Activated naive CD4-positive, alpha-beta T cell treated with anti-CD3 and anti-CD28 coated beads for 36 hours (primary cell): ENCODE measurements at regions of chr3 and their contacts with region 1.

Region 1: GRCh38 chr3:16884084-16884747 is 539 bp upstream of the PLCL2 start:
- DNase-seq: peak; percentile 80
- H3K4me3 Mint-ChIP-seq: peak overlapping the region; percentile 86
- H3K27ac Mint-ChIP-seq: peak overlapping the region; percentile 95
- H3K4me1 Mint-ChIP-seq: peaks cover 14% of the 10 kb centered on the region
- H3K27me3 Mint-ChIP-seq: no peaks in the 10 kb centered on the region

Region 2: DNA sequence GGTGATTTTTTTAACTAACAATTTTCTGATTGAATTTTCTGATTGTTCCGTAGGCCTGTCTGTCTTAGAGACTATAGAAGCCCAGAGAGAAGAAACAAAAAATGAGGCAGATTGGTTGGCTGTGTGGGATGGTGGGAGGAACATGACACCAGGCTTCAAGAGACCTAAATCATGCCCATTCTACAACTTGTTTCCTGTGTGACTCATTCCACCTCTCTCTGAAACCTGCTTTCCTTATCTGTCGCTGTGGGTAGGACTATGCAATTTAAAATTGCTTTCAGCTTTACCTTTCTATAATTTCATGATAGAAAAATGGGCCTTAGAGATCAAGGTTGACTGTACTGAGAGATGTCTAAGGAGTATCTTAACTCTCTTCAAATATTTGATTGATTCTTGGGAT is 574.7 kb before region 1 on chr3:
- CTCF ChIA-PET with region 1: no interaction called
- intact Hi-C with region 1: loop called (anchors 5 kb)
- DNase-seq: peak; percentile 76
- H3K4me3 Mint-ChIP-seq: peak overlapping the region; percentile 22
- H3K27ac Mint-ChIP-seq: peak overlapping the region; percentile 92
- H3K4me1 Mint-ChIP-seq: peaks cover 91% of the 10 kb centered on the region
- H3K27me3 Mint-ChIP-seq: no peaks in the 10 kb centered on the region

Region 3: DNA sequence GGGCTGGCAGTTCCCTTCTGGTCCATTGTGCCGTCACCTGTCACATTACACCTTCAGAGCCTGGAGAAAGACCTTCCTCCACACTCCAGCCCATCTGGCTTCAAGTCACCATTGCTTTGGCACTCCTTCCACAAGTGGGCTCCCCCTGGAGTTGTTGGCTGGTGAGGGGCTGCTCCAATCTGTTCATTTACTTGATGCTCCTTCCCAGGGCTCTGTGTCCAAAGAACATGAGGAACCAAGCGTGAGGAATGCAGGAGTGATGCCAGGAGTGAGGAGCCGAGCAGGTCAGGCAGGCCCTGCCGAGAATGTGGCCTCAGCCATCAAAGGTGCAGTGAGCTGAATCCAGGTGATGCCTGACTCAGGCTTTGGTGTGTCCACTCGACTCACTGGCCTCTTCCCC is 562.0 kb before region 1 on chr3:
- CTCF ChIA-PET with region 1: no interaction called
- intact Hi-C with region 1: no loop called
- DNase-seq: no peak
- H3K4me3 Mint-ChIP-seq: no peak overlapping the region
- H3K27ac Mint-ChIP-seq: peak overlapping the region; percentile 95
- H3K4me1 Mint-ChIP-seq: peaks cover 59% of the 10 kb centered on the region
- H3K27me3 Mint-ChIP-seq: no peaks in the 10 kb centered on the region

Region 4: DNA sequence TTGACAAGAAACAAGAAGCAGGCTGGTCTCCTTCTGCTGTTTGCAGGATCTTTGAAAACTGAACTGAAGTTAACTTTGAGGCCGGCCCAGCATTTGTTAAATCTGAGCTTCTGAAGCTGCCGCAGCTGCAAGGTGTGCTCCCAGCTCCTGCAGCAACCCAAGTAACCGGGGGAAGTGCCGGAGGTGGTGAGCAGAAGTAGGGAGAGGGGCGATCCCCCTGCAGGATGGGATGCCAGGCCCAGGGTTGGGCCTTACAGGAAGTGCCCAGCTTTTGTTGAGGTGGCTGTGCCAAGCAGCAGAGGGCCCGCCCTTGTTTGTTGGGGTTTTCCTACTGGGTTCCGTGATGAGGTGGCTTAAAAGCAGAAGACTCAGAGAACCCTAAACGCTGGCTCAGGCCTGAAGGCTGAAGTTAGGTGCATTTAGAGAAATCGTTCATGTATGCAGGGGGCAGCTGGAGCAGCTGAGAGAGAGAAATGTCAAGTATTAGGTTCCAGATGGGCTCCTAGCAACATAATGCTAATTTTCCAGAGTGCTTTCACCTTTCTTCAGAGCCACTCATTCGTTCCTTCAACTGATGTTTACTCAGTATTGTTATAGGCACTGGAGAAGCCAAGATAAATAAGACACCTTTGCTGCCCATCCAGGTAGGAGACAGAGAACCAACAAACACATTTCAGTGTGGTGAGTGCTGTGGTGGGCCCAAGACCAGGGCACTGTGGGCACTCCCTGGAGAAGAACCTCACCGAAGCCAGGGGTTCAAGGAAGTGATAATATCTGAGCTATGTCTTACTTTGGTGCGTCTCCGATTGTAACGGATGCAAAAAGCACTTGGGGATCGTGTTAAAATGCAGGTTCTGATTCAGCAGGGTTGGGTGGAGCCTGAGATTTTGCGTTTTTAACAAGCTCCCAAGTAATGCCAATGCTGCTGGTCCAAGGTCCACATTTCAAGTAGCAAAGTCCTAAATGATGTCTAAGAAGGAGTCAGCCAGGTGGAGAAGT is 41.6 kb before region 1 on chr3:
- CTCF ChIA-PET with region 1: interaction called, 6 read pairs
- intact Hi-C with region 1: loop called (anchors 1 kb)
- DNase-seq: peak; percentile 91
- H3K4me3 Mint-ChIP-seq: peak overlapping the region; percentile 72
- H3K27ac Mint-ChIP-seq: peak overlapping the region; percentile 93
- H3K4me1 Mint-ChIP-seq: peaks cover 68% of the 10 kb centered on the region
- H3K27me3 Mint-ChIP-seq: no peaks in the 10 kb centered on the region

Region 5: DNA sequence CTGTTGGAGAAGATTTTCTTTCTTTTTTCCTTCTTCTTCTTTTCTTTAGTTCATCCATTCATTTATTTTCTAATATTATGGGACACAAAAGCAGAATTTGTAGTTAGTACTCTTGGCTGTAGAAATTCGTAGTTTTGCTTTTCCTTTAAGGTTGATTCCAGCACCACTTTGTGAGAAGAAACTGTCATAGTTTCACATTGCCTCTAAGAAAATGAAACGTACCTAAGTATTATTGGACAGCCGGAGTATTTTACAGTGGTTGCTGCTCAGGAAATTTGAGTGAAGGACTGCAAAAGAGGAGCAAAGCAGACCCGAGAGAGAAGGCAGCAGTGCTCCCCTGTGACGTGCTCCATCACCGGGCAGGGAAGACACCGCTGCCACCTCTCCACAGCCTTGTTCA is 48.7 kb after region 1 on chr3:
- CTCF ChIA-PET with region 1: interaction called, 6 read pairs
- intact Hi-C with region 1: loop called (anchors 2 kb)
- DNase-seq: no peak
- H3K4me3 Mint-ChIP-seq: peak overlapping the region; percentile 69
- H3K27ac Mint-ChIP-seq: peak overlapping the region; percentile 16
- H3K4me1 Mint-ChIP-seq: peaks cover 92% of the 10 kb centered on the region
- H3K27me3 Mint-ChIP-seq: no peaks in the 10 kb centered on the region

Region 6: DNA sequence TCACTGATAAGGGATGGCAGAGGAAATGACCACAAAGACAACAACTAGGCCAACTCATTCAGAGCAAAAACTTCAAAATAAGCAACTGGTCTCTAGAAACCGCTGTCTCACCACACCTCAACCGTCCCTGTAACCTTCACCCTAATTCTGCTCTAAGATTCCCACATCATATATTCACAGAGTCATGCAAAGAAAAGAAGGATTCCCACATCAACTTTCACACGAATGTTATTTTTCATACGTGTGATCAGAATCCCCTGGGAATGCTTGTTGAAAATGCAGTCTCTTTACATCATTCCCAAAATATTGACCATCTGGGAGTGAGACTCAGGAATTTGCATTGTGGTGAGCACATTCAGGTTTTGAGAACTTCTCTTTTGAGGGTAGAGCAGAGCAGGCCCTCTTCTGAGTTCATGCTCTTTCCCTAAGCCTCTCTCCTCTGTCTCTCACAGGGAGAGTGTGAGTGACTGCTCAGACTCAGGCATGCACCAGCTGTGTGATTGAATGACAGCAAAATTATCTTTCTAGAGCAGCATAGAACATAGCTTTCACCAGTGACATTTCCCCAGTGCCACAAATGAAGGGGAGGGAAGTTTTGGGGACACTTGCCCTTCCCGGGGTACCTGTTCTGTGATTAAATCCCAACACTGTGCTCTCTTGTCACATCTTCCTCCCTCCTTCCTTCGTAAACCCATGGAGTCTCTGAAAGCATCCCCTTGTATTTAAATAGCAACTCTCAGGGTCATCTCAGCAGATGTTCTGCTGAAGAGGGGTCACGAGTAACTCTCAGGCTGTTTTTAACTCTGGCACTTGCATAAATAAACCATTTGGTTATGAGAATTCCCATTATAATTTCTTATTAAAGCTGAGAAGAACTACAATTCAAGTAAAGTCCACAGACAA is 171.4 kb after region 1 on chr3:
- CTCF ChIA-PET with region 1: no interaction called
- intact Hi-C with region 1: no loop called
- DNase-seq: no peak
- H3K4me3 Mint-ChIP-seq: no peak overlapping the region
- H3K27ac Mint-ChIP-seq: no peak overlapping the region
- H3K4me1 Mint-ChIP-seq: peaks cover 12% of the 10 kb centered on the region
- H3K27me3 Mint-ChIP-seq: no peaks in the 10 kb centered on the region

Region 7: DNA sequence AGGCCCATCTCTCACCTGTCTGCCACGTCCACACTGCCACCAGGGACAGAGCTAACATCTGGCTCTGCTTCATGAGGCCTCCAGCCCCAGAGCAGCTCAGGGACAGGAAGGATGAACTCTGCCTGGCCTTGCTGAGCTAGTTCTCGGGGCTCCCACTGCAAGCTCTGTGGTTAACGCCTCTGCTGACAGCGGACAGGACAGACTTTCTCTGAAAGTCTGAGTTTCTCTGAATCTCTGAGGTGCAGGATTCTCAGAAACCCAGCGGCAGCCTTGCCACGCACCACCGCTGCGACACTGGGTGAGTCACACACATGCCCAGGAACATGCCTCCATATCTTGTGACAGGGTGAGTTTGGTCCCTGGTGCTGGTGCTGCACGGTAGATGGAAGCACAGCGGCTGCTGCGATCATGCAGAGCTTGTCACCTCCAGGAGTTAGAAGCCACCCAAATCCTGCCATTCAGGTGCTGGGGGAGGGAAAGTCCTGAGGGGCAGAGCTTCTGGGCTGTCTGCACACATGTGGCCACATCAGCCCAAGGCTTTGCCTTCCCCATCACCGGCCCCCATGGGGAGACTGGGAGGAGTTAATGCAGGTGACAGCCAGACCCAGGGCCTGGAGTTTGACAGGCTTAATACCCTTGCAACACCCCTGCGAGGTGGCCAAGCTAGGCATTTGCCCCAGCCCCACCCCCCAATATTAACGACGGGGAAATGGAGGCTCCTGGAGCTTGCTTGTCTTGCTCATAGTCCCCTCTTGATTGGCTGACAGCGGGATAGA is 267.6 kb after region 1 on chr3:
- CTCF ChIA-PET with region 1: interaction called, 4 read pairs
- intact Hi-C with region 1: loop called (anchors 1 kb)
- DNase-seq: peak; percentile 95
- H3K4me3 Mint-ChIP-seq: peak overlapping the region; percentile 28
- H3K27ac Mint-ChIP-seq: peak overlapping the region; percentile 85
- H3K4me1 Mint-ChIP-seq: peaks cover 25% of the 10 kb centered on the region
- H3K27me3 Mint-ChIP-seq: no peaks in the 10 kb centered on the region

Region 8: DNA sequence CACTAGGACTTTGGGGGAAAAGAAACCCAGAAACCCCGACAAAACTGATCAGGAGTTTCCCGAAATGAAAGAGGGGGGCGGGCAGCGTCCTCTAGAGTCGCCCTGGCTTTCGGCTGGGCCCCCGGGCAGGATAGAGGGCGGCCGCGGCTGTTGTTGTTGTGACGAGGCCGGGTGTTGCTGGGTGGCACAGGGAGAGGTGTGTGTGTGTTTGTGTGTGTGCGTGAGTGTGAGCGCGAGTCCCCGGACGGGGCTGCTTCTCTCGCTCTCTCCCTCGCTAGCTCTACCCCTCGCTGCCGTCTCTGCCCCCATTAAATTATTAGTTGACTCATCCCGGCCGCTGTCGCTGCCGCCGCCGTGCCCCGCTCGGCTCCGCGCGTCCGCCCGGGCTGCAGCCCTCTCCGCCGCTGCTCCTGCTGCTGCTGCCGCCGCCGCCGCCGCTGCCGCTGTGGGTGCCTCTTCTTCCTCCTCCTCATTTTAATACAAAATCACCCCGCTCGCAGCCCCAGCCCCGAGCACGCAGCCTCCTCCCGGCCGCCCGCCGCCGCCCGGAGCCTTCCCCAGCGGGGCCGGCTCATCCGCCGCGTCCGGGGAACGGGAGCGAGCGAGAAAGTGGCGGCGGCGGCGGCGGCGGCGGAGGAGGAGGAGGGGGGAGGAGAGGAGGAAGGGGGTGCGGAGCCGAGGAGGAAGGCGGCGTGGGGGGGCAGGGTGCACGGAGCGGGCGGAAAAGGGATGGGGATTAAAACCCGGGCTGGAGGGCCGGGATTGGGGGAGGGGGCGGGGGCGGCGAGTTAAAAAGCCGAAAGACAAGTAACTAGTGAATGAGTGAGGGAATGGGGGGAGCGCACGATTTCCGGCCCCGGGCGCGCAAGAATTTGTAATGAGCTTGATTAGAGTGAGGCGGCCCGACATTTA is 1540.8 kb after region 1 on chr3 and contains the start of gene SATB1:
- CTCF ChIA-PET with region 1: no interaction called
- intact Hi-C with region 1: loop called (anchors 5 kb)
- DNase-seq: peak; percentile 84
- H3K4me3 Mint-ChIP-seq: peak within 1 kb of the TSS; percentile 86
- H3K27ac Mint-ChIP-seq: peak within 1 kb of the TSS; percentile 98
- H3K4me1 Mint-ChIP-seq: peaks cover 73% of the 10 kb centered on the region
- H3K27me3 Mint-ChIP-seq: no peaks in the 10 kb centered on the region
- total RNA-seq, gene SATB1: 303 to 305 TPM